ENCODE measurements at regions of chr9 and their contacts with region 1.

Region 1: DNA sequence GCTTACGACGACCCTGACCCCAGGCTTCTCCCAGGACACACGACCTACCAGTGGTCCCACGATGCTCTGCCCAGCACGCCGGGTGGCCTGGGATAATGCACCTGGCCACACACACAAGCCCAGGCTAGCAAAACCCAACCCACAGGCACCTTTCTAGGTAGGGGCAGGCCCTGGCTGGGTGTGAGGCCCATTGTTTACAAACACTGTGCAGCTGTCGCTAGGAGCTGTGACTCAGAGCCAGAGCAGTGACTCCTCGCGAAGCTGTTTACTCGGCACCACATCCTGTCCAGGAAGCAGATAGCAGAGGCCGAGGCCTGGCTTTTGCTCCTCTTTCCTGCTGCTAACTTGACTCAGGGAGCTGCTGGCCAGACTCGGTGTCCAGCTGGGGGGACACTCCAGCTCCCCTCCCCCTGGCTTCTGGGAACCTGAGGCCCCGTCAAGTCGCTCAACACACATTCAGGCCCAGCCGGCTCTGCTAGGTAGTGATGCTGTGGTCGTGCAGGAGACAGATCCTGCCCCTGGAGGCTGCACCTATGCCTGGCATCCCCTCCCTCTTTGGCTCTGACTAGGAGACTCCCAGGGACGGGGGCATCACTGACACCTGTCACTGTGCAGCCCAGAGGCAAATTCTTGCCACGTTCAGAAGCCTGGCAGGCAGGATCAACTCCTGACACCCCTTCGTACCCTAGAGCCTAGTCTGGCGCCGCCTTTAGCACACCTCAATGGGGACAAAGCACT is 12.8 kb upstream of the RALGDS start:
- DNase-seq: peak; percentile 98
- H3K4me3 Mint-ChIP-seq: peak overlapping the region; percentile 44
- H3K27ac Mint-ChIP-seq: peak overlapping the region; percentile 98
- H3K4me1 Mint-ChIP-seq: peaks cover 27% of the 10 kb centered on the region
- H3K27me3 Mint-ChIP-seq: no peaks in the 10 kb centered on the region
- CTCF ChIP-seq: no peak

Region 2: DNA sequence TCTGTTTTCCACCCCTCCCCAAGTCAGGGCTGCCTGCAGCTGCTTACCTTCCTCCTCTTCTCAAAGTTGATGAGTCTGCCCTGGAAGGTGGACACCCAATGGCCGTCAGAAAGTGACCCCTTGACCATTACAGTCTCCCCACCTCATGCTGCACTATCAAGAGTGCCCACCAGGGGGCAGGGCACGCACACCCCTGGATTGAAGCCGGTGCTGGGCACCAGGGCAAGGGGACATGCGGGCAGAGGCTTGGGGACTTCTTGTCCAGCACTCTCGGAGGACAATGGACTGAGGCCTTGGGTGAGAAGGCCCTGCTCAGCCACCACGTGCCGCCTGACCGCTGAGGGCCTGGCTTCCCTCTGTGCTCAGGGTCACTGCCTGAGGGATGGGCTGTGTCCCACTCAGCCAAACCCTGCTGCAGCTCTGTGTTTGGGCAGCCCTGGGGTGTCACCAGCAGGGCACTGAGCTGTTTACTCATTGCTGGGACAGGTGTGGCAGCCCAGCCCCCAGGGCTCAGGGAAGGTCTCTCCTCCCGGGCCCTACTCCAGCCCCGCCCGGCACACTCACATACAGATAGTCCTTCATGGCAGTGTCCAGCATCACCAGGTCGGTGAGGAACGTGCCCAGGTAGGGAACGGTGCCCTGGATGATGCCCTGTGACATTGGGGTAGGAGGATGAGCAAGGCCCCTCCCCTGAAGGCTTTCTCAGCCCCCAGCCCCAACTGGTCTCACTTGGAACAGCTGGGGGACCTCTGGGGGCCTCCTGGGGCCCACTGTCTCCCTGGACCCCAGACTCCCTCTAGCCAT is 30.5 kb before region 1 on chr9:
- CTCF ChIA-PET with region 1: interaction called, 8 read pairs
- POLR2A ChIA-PET with region 1: interaction called, 5 read pairs
- intact Hi-C with region 1: loop called (anchors 1 kb)
- DNase-seq: peak; percentile 58
- H3K4me3 Mint-ChIP-seq: no peak overlapping the region
- H3K27ac Mint-ChIP-seq: peak overlapping the region; percentile 75
- H3K4me1 Mint-ChIP-seq: no peaks in the 10 kb centered on the region
- H3K27me3 Mint-ChIP-seq: no peaks in the 10 kb centered on the region
- CTCF ChIP-seq: peak; percentile 95

Region 3: DNA sequence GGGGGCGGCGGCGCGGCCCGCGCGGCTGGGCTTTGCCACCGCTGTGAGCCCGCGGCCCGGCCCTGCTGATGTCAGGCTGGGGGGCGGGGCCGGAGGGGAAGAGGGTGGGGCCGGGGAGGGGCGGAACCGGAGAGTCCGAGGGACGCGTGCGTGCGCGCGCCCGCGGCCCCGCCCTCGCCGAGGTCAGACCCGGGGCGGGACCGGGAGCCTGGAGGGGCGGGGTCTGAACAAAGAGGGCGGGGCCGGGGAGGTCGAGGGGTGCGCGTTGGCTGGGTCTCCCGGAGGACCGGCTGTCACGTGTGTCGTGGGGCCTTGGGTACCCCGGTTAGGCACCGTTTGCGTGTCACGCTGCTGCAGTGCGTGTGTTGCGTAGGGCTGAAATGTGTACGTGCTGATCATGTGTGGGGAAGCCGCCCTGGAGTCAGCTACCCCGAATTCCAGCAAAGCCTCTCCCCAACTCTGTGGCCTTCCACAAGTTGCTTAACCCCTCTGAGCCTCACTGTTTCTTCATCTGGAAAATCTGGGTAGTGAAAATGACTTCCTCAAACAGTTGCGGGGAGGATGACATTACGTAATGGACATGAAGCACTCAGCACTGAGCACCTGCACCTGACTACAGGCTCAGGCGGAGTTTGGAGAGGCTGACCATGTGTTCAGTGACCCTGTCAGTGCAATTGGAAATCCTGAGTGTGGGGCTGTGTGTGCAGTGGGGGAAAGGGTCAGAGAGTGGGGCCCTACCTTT is 12.5 kb before region 1 on chr9 and contains the start of gene RALGDS:
- CTCF ChIA-PET with region 1: interaction called, 4 read pairs
- POLR2A ChIA-PET with region 1: interaction called, 21 read pairs
- intact Hi-C with region 1: no loop called
- DNase-seq: peak; percentile 88
- H3K4me3 Mint-ChIP-seq: peak within 1 kb of the TSS; percentile 66
- H3K27ac Mint-ChIP-seq: peak within 1 kb of the TSS; percentile 54
- H3K4me1 Mint-ChIP-seq: peaks cover 22% of the 10 kb centered on the region
- H3K27me3 Mint-ChIP-seq: no peaks in the 10 kb centered on the region
- CTCF ChIP-seq: no peak
- total RNA-seq, gene RALGDS: 14.2 and 15.4 TPM in 2 replicates

Region 4: DNA sequence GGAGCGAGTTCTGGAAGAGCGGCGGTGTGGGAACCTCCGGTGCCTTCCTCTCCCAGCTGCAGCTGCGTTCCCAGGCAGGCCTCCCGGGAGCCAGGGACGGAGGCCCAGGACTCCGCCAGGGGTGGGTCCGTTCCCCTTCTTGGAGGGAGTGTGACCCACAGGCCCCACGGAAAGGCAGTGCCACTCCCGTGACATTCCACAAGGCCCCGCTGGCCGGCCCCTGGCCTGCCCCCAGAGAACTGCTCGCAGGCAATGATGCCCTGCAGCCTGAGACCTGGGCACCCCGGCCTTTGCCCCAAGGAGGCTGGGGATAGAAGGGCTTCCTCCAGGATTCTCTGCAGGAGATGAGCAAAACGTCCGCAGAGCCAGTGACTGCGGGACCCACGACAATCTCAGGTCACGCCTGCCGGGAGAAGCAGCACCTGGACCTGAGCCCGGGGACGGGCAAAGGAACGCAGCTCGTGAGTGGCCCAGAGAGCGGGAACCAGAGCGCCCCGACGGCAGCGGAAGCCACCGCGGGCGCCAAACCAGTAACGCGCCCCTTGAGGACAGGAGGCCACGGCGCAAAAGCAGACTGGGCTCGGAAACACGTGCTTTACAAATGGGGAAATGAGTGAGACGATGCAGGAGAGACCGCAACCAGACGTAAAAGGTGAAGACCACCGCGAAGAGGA is 65.9 kb after region 1 on chr9:
- CTCF ChIA-PET with region 1: no interaction called
- POLR2A ChIA-PET with region 1: no interaction called
- intact Hi-C with region 1: no loop called
- DNase-seq: no peak
- H3K4me3 Mint-ChIP-seq: no peak overlapping the region
- H3K27ac Mint-ChIP-seq: no peak overlapping the region
- H3K4me1 Mint-ChIP-seq: no peaks in the 10 kb centered on the region
- H3K27me3 Mint-ChIP-seq: peaks cover 9% of the 10 kb centered on the region
- CTCF ChIP-seq: no peak

Measured in MCF 10A (cell line).